ENCODE measurements at regions of chr5 and their contacts with region 1.

Region 1: GRCh38 chr5:119302916-119303897 is 52.6 kb upstream of the TNFAIP8 start:
- DNase-seq: peak; percentile 99
- ATAC-seq: peak; percentile 97
- H3K4me3 ChIP-seq: no peak overlapping the region
- H3K27ac ChIP-seq: peak overlapping the region; percentile 91
- H3K4me1 ChIP-seq: peaks cover 16% of the 10 kb centered on the region
- H3K27me3 ChIP-seq: no peaks in the 10 kb centered on the region
- CTCF ChIP-seq: no peak; the same call in 1 of the 2 replicates
- POLR2A ChIP-seq: peak; percentile 33; the same call in 1 of the 2 replicates
- RAD21 ChIP-seq: peak; percentile 26

Region 2: DNA sequence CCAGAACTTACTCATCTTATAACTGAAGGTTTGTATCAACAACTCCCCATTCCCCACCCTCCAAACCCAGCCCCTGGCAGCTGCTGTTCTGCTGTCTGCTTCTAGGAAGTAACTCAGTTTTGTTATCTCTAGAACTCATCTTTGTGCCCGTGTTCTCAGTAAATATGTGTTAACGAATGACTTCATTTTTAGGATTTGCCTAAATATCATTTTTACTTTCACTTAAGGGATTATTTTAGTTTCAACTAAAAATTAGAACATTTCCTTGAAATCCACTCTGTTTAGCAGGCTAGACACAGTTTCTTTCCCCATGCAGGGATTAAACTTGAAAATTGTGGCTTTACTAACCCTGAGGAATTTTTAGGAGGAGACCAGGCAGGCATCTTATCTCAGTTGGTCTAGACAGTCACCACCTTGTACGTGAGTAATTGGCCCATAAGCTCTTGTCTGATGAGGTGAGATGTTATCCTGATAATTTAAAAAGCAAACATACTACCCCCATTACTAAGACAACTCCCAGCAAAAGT is 15.6 kb before region 1 on chr5:
- CTCF ChIA-PET with region 1: interaction called, 3 read pairs
- POLR2A ChIA-PET with region 1: no interaction called
- dilution Hi-C with region 1: no loop called
- in situ Hi-C with region 1: no loop called
- intact Hi-C with region 1: loop called (anchors 2 kb)
- DNase-seq: peak; percentile 32
- ATAC-seq: peak; percentile 37
- H3K4me3 ChIP-seq: no peak overlapping the region
- H3K27ac ChIP-seq: no peak overlapping the region; the same call in 1 of the 2 replicates
- H3K4me1 ChIP-seq: peaks cover 13% of the 10 kb centered on the region
- H3K27me3 ChIP-seq: no peaks in the 10 kb centered on the region
- CTCF ChIP-seq: no peak
- POLR2A ChIP-seq: no peak
- RAD21 ChIP-seq: no peak

Region 3: DNA sequence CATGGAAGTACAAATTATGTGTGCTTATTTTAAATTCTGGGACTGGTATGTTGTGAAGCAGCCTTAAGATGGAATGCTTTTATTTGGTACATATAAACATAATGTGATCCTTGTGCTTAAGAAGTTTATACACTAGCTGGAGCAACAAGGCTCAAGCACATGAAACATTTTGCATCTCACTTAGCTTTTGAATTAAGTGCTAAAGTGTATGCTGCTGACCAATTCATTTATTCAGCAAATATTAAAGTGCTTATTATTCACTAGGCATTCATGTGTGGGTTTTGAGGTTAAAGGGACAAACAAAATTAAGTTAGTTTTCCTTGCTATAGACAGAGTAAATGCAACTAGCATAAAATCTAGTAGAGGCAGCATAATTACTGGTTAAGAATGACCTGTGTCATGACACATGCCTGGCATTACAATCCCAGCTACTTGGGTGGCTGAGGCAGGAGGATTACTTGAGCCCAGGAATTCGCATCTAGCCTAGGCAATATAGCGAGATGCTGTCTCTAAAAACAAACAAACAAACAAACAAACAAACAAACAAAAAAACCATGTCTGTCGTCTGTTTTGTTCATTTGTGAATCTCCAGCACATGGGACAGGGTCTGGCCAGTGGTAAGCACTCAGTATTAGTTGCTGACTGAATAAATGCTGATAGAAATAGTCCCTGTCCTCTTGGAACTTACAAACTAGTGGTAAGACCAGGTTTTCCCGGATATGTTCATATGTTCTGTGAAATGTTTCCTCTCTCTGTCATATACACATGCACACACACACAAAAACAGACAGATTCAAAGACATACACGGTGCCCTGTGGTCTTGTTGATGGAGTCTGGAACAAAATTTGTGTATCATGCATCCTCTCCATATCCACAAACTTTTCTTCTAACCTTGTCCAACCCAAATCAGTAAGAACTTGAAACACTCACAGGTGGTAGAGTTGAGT is 10.7 kb after region 1 on chr5:
- CTCF ChIA-PET with region 1: interaction called, 7 read pairs
- POLR2A ChIA-PET with region 1: no interaction called
- dilution Hi-C with region 1: no loop called
- in situ Hi-C with region 1: no loop called
- intact Hi-C with region 1: loop called (anchors 1 kb)
- DNase-seq: peak; percentile 35
- ATAC-seq: peak; percentile 90
- H3K4me3 ChIP-seq: no peak overlapping the region
- H3K27ac ChIP-seq: peak overlapping the region; percentile 36; the same call in 1 of the 2 replicates
- H3K4me1 ChIP-seq: peaks cover 11% of the 10 kb centered on the region
- H3K27me3 ChIP-seq: no peaks in the 10 kb centered on the region
- CTCF ChIP-seq: no peak
- POLR2A ChIP-seq: no peak
- RAD21 ChIP-seq: no peak

Measured in IMR-90 (cell line).